ENCODE measurements at regions of chr1 and their contacts with region 1.

Region 1: DNA sequence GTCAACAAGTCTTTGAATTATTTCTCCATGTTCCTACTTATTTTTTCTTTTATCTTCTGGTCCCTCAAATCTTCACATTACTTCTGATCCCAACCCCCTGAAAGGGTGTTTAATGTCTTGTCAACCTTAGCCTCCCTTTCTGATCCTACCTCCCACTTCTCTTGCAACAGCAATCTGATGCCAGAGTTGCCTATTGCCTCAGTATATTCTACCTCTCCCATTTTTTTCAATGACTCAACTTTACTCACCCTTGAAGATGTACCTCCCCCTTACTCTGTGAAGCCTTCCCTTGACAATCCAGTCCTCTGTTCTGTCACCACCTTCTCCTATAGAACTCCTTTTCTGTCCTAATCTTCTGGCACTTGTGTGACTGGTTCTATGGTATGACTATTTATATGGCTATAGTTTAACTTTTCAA is 99.5 kb upstream of the CD55 start:
- DNase-seq: no peak
- H3K4me3 ChIP-seq: no peak overlapping the region
- H3K27ac ChIP-seq: no peak overlapping the region
- H3K4me1 ChIP-seq: peaks cover 0 to 2% of the 10 kb centered on the region in 2 donors
- H3K27me3 ChIP-seq: no peaks in the 10 kb centered on the region
- CTCF ChIP-seq: no peak
- POLR2A ChIP-seq: no peak

Region 2: GRCh38 chr1:208270651-208271111 is 1048.7 kb after region 1 on chr1:
- intact Hi-C with region 1: loop called (anchors 5 kb)
- DNase-seq: no peak
- H3K4me3 ChIP-seq: no peak overlapping the region
- H3K27ac ChIP-seq: no peak overlapping the region
- H3K4me1 ChIP-seq: no peaks in the 10 kb centered on the region
- H3K27me3 ChIP-seq: peaks cover 0 to 15% of the 10 kb centered on the region in 2 donors
- CTCF ChIP-seq: no peak
- POLR2A ChIP-seq: no peak

Region 3: GRCh38 chr1:208461680-208462079 is 1239.7 kb after region 1 on chr1:
- intact Hi-C with region 1: no loop called
- DNase-seq: no peak
- H3K4me3 ChIP-seq: no peak overlapping the region
- H3K27ac ChIP-seq: no peak overlapping the region
- H3K4me1 ChIP-seq: no peaks in the 10 kb centered on the region
- H3K27me3 ChIP-seq: no peaks in the 10 kb centered on the region
- CTCF ChIP-seq: no peak
- POLR2A ChIP-seq: no peak

Measured in breast epithelium (tissue), 4 donors.